ENCODE measurements at regions of chr17 and their contacts with region 1.

Region 1: DNA sequence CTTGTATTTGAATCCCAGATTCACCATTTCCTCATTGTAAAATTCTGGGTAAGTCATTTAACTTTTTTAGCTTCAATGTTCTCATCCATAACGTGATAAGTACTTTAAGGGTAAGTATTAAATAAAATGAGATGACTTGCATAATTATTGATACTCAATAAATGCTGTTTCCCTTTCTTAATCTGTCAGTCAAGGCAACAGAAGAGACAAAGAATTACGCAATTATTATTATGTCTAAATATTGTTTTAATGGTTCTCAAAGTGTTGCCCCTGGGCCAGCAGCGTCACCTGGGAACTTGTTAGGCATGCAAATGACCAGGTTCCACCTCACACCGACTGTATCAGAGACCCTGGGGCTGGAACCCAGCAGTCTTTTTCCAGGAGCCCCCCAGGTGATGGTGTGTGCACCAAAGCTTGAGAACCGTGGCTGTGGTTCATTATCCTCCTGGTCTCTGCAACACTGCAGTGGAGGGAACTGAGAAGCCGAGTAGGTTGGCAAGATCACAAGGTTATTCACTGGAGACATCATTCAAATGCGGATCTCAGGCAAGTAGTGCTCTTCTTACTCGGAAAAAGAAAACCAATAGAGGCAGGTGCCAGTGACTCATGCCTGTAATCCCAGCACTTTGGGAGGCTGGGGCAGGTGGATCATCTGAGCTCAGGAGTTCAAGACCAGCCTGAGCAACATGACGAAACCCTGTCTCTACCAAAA is 43.5 kb downstream of the LYRM9 start:
- DNase-seq: no peak
- ATAC-seq: no peak
- H3K4me3 ChIP-seq: no peak overlapping the region
- H3K27ac ChIP-seq: no peak overlapping the region
- H3K4me1 ChIP-seq: no peaks in the 10 kb centered on the region
- H3K27me3 ChIP-seq: no peaks in the 10 kb centered on the region
- CTCF ChIP-seq: no peak

Region 2: GRCh38 chr17:27692766-27693165 is 156.9 kb before region 1 on chr17:
- intact Hi-C with region 1: no loop called
- DNase-seq: no peak
- ATAC-seq: no peak
- H3K4me3 ChIP-seq: no peak overlapping the region
- H3K27ac ChIP-seq: no peak overlapping the region
- H3K4me1 ChIP-seq: no peaks in the 10 kb centered on the region
- H3K27me3 ChIP-seq: peaks cover 0 to 2% (median 0%) of the 10 kb centered on the region in 3 donors
- CTCF ChIP-seq: no peak

Region 3: DNA sequence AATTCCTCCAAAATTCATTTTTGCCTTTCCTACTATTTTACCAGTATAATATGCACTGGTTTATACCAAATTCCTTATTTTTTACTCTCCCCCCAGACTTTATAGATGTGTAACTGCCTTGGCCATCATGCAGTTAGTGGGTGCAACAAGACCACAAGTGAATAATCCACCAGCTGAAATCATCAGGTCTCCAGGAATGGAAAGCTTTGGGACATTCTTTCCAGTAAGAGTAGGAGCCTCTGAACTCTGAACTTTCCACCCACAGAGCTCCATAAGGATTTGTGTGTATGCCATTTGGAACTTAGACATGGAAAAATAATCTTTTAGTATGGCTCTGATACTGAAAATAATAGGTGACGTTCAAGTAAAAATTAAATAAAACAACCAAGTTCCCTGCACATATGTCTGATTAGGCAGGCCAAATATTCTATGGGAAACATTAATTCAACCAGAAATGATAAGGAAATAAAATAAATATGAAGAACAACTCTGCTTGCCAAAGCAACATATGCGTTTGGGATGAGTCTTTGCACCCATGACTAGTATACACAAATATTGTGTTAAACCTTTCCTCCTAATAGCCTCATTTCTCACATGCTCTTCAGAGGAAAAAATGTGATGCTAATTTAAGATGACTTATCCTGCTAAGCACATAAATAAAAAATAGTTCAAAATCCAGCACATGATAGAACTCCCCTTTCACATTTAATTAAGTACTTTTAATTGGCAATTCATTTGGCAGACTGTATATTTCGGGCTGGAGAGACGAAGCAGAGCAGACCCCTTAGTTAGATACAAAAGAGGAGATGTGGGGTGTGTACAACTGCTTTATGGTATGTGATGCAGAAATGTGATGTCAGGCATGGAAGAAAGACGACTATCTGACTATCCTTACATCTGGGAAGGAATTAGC is 55.2 kb after region 1 on chr17:
- intact Hi-C with region 1: loop called in 1 of 2 experiments (anchors 5 kb)
- DNase-seq: no peak
- ATAC-seq: no peak
- H3K4me3 ChIP-seq: no peak overlapping the region
- H3K27ac ChIP-seq: no peak overlapping the region
- H3K4me1 ChIP-seq: no peaks in the 10 kb centered on the region
- H3K27me3 ChIP-seq: no peaks in the 10 kb centered on the region
- CTCF ChIP-seq: no peak

Region 4: DNA sequence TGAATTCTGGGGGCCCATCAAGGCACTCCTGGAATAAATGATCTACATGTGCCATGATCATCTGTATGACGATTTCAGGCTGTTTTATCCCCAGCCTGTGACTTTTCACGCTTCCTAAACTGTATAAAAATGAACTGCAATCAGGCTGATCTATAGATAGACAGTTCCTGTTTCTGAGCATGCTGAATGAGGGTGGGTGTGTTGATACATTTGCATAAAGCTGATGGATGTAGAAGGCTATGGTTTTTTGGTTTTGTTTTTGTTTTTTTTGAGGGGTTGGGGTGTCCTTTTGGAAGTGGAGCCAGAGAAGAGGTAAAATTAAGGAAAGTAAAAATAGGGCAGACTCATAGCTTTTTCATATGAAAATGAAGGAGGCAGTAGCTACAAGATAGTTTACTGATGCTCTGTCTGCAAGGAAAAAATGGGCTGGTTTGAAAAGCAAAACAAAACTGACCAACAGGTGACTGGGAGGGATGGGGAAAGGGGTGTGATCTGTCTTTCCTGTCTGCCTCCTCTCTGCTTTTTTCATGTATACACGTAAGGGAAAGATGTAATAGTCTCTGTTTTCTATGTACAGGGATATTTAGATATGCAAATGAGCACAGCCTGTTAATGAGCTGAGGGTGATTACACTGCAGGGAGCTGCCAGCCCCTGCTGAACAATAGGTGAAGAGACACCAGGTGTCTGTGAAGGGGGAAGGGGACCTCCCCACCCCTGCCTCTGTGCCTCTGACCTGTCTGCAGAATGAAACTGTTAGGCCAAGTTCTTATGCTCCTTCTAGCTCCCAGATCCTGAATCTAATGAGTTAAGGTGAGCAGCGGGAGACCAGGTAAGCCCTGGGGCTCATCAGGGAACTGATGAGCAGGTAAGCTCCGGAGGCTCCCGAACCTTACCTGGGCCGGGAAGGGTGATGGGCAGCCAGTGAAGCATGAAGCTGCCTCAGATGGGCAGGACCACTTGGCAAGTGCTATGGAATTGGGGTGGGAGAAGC is 90.1 kb after region 1 on chr17:
- intact Hi-C with region 1: no loop called
- DNase-seq: no peak
- ATAC-seq: no peak
- H3K4me3 ChIP-seq: no peak overlapping the region
- H3K27ac ChIP-seq: no peak overlapping the region
- H3K4me1 ChIP-seq: no peaks in the 10 kb centered on the region
- H3K27me3 ChIP-seq: peaks cover 0 to 7% (median 0%) of the 10 kb centered on the region in 3 donors
- CTCF ChIP-seq: no peak

Measured in psoas muscle (tissue), 8 donors.